ENCODE measurements at regions of chr12 and their contacts with region 1.

Region 1: DNA sequence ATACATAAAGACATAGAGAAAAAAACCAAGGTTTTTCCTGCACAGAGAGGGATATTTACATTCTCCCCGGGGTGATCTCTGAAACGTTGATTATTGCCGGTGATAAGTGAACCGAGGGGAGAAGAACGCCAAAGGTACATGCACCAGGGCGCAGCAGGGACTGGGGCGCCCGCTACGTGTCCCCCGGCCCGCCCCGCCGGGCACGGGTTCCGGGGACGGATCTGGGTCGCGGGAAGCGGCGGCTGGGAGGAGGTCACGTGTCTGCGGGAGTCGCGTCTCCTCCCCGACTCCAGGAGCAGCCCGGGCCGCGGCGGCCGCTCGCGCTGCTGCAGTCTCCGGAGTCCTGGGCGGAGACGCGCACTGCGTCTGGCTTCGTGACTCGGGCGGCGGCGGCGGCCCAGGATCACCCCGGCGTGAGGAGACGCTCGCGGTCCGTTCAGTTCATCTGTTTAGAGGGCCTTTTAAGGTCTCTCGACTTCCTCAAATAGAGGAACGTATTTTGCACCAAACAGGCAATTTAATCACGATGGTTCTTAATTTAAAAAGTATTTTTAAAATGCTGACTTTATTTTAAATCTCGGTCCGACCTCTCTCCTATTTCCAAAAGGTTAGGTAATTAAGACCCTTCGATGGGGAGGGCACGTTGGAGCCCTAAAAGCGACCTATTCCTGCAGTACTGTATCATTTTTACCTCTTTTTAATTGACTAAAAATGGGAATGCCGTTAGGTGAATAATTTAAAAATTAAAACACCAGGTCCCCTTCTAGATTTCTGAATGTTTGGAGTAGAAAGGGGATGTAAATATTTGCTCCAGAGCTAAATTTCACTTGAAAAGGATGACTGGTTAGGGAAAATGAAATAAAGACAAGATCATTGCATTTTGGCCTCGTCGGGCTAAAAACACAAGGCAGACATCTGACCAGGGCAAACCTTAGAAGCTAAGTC is 1.8 kb upstream of the BHLHE41 start:
- DNase-seq: peak; percentile 60 to 93
- H3K4me3 ChIP-seq: peak overlapping the region; percentile 77 to 82
- H3K27ac ChIP-seq: peak overlapping the region; percentile 96 to 97
- H3K4me1 ChIP-seq: peaks cover 0 to 12% of the 10 kb centered on the region in 2 donors
- H3K27me3 ChIP-seq: no peaks in the 10 kb centered on the region
- CTCF ChIP-seq: peak in 1 of 3 experiments; percentile 11

Region 2: DNA sequence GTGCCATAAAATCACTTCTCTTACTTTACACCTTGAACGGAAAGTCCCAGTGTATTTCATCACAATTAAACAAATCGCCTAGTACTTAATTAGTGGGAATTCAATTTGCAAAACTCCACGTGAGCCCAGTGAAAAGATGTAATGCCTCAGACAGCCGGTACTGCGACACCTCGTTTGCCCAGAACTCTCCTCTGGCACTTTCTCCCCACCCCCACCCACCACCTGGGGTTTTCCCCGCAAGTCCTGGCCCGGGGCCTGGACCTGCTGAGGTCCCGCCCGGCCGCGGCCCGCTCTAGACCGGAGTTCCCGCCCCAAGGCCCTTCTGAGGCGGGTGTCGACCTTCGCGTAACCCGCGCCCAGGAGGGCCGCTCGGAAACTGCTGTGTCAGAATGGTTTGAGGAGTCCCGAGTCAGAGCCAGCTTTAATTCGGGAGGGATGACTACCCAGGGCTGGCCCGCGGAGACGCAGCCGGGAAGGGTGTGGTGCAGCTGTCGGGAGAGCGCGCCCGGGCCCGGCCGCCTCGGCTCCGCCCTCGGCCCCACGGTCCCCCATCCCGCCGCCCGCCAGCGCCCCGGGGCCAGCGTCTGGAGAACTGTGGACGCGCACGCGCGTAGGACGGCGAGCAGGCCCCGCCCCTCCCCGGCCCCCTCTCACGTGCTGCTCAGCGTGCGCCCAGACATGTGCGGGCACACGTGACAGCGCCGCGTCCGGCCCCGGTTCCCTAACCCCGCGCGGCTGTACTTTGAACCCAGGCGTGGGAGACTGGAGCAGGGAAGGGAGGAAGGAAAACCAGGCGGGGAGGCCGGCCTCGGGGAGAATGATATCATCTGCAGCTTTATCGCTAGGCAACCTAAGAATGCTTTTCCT is 12.5 kb before region 1 on chr12:
- intact Hi-C with region 1: loop called (anchors 1 kb)
- DNase-seq: peak; percentile 81 to 97
- H3K4me3 ChIP-seq: peak overlapping the region; percentile 57
- H3K27ac ChIP-seq: peak overlapping the region; percentile 89 to 92
- H3K4me1 ChIP-seq: peaks cover 0 to 17% of the 10 kb centered on the region in 2 donors
- H3K27me3 ChIP-seq: no peaks in the 10 kb centered on the region
- CTCF ChIP-seq: peak; percentile 24 to 38 (median 26)

Region 3: GRCh38 chr12:26195641-26196420 is 69.2 kb after region 1 on chr12:
- intact Hi-C with region 1: loop called (anchors 1 kb)
- DNase-seq: peak in 1 of 2 donors; percentile 79
- H3K4me3 ChIP-seq: peak overlapping the region; percentile 58 to 74
- H3K27ac ChIP-seq: peak overlapping the region; percentile 88 to 90
- H3K4me1 ChIP-seq: peaks cover 0 to 21% of the 10 kb centered on the region in 2 donors
- H3K27me3 ChIP-seq: no peaks in the 10 kb centered on the region
- CTCF ChIP-seq: no peak

Region 4: DNA sequence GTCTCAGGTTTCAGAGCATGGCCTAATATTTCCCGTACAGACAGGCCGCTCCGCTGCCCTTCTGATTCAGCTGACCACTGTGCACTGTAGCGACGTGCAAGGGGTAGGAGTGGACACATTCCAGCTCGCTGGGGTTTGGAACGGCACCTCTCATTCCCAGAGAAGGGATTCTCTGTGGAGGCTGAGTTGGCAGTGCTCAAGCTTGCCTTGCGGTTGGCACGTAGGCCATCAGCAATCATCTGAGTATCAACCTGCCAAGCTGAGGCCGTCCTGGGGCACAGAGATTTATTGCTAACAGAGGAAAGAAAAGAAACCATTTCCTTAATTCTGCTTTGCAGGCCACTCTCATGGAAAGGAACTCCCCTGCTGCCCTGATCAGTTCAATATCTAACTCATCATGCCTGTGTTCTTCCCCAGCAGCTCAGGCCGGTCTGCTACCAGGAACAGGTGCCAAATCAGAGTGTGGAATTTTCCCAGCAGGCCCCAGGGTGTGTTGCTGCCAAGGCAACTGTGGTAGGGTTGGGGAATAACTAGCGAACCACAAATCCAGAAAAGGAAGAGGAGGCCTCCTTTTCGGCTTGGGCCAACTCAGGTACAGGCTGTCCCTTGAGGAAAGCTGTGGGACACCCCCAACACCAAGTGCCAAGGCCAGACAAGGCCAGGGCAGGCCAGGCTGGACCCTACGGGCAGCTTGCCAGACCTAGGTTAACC is 161.2 kb after region 1 on chr12:
- intact Hi-C with region 1: loop called (anchors 5 kb)
- DNase-seq: peak in 1 of 2 donors; percentile 77
- H3K4me3 ChIP-seq: peak overlapping the region in 1 of 2 donors; percentile 17
- H3K27ac ChIP-seq: peak overlapping the region; percentile 87 to 93
- H3K4me1 ChIP-seq: peaks cover 7 to 15% of the 10 kb centered on the region in 2 donors
- H3K27me3 ChIP-seq: no peaks in the 10 kb centered on the region
- CTCF ChIP-seq: no peak

Region 5: GRCh38 chr12:26832822-26833742 is 706.5 kb after region 1 on chr12 and contains the start of gene ITPR2:
- intact Hi-C with region 1: loop called (anchors 5 kb)
- DNase-seq: peak; percentile 88 to 98
- H3K4me3 ChIP-seq: peak within 1 kb of the TSS; percentile 88 to 94
- H3K27ac ChIP-seq: peak within 1 kb of the TSS; percentile 90 to 97
- H3K4me1 ChIP-seq: peaks cover 0 to 8% of the 10 kb centered on the region in 2 donors
- H3K27me3 ChIP-seq: no peaks in the 10 kb centered on the region
- CTCF ChIP-seq: peak in 2 of 3 experiments; percentile 21 to 27
- total RNA-seq, gene ITPR2: 12.5 TPM

Measured in ascending aorta (tissue), 2 donors.